Mammary epithelial cell (primary cell): ENCODE measurements at regions of chr3 and their contacts with region 1.

Region 1: GRCh38 chr3:64399205-64399800 is 174.0 kb upstream of the PRICKLE2 start:
- DNase-seq: peak; percentile 62
- H3K4me3 ChIP-seq: no peak overlapping the region
- H3K27ac ChIP-seq: no peak overlapping the region
- H3K4me1 ChIP-seq: no peaks in the 10 kb centered on the region
- H3K27me3 ChIP-seq: no peaks in the 10 kb centered on the region
- CTCF ChIP-seq: peak; percentile 82 to 90

Region 2: GRCh38 chr3:64030741-64031140 is 368.6 kb before region 1 on chr3:
- CTCF ChIA-PET with region 1: no interaction called
- dilution Hi-C with region 1: no loop called
- in situ Hi-C with region 1: loop called (anchors 5 to 10 kb)
- intact Hi-C with region 1: loop called (anchors 1 kb)
- DNase-seq: peak; percentile 58
- H3K4me3 ChIP-seq: peak overlapping the region in 1 of 3 experiments; percentile 6
- H3K27ac ChIP-seq: peak overlapping the region; percentile 16
- H3K4me1 ChIP-seq: peaks cover 9% of the 10 kb centered on the region
- H3K27me3 ChIP-seq: no peaks in the 10 kb centered on the region
- CTCF ChIP-seq: peak; percentile 64 to 94

Region 3: DNA sequence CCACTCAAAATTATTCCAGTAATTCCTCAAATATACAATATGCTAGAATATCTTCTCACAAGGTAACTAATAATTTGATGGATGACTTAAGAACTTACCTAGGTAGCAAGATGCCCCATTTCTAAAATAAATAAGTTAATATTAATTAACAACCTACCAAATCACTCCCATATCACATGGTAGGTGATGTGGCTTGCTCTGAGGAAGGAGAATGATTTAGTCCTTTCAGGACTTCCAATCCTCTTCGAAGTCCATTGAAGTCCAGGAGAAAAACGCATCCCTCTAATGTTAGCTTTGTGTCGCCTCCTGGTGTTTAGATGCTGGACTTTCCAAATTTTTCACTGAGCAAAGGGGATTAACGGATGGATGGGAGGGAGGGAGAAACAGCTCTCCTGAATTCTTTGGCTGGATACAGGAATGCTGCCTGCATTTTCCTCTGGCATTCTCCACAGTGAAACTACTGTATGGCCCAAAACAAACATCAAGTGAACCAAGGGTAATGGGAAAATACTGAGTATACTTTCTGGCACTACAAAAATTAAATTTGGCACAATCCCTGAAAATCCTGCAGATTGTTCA is 232.6 kb before region 1 on chr3:
- CTCF ChIA-PET with region 1: no interaction called
- dilution Hi-C with region 1: no loop called
- in situ Hi-C with region 1: no loop called
- intact Hi-C with region 1: no loop called
- DNase-seq: no peak
- H3K4me3 ChIP-seq: no peak overlapping the region
- H3K27ac ChIP-seq: peak overlapping the region; percentile 75
- H3K4me1 ChIP-seq: peaks cover 53% of the 10 kb centered on the region
- H3K27me3 ChIP-seq: no peaks in the 10 kb centered on the region
- CTCF ChIP-seq: peak; percentile 20 to 28

Region 4: DNA sequence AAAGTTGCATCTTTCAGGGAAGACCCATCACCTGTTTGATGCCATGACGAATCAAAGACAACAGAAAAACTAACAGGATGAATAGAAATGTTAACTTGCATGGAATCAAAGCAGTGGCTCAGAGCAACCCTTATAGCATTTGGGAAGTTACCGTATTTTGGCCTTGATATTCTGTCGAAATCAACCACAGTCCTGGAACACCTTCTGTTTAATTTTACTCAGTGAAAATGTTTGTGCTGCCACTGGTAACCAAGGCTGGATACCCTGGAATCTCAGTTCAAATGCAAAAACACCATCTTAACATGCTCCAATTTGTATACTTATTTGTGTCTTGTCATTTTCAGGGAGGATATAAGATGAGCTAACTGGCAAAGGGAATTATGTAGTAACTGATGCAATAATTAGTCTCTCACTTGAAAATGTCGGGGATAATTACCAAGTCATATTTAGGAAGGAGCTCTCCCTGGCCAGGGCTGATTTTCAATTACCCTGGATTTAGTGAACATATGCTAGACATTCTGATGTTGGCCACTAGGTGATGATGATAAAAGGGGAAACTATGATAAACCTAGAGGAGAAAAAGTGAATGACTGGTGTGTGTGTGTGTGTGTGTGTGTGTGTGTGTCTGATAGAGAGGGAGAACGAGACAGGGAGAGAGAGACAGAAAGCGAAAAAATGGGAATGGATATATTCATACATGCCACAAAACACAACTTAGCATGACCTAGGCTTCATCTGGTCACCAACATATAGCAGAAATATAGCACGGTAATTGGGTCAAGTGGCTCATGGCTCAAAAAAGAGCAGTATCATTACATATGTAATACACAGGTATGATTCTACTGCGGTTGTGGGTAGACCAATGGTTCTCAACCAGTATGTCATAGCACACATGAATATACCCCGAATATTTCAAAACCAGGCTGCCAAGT is 155.0 kb before region 1 on chr3:
- CTCF ChIA-PET with region 1: no interaction called
- dilution Hi-C with region 1: no loop called
- in situ Hi-C with region 1: no loop called
- intact Hi-C with region 1: loop called (anchors 1 kb)
- DNase-seq: no peak
- H3K4me3 ChIP-seq: no peak overlapping the region
- H3K27ac ChIP-seq: no peak overlapping the region
- H3K4me1 ChIP-seq: peaks cover 6% of the 10 kb centered on the region
- H3K27me3 ChIP-seq: no peaks in the 10 kb centered on the region
- CTCF ChIP-seq: peak; percentile 50 to 64

Region 5: DNA sequence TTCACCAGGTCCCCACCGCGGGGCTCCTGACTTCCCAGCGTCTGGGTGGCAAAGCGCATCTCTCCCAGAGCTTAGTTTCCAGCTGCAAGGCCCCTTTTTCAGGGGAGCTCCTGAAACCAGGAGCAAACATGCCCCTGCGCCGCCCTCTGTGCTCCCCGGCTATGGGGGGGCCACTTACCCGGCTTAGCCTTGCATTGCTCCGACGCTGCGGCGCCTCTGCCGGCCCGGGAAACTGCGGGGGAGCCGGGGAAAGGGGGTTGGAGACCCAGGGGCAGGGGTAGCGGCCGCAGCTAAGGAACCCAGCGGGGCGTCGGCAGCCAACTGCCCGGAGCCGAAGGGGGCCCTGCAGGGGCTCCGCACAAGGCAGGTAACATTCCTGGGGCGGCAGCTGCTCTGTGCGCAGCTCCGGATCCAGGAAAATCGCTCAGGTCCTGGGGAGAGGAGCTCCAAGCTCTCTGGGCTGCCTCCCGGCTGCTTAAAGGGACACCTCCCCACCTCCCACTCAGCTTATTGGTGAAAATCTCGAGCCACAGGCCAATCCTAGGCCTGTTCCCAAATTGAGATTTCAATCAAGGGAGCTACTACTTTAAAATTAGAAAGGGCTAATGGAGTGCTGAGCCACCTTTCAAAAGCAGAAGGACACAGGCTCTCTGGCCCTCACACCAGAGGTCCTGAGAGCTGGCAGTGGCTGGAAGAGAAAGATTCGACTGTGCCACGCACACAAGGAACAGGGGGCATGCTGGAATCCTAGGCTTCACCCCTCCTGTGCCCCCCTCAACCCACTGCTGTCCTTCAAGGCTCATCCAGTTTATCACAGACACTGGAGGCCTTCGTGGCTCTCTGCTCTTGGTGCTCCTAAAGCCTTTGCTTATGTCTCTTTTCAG is 131.3 kb before region 1 on chr3:
- CTCF ChIA-PET with region 1: no interaction called
- dilution Hi-C with region 1: no loop called
- in situ Hi-C with region 1: no loop called
- intact Hi-C with region 1: loop called (anchors 5 kb)
- DNase-seq: peak; percentile 76
- H3K4me3 ChIP-seq: peak overlapping the region; percentile 68 to 89 (median 84)
- H3K27ac ChIP-seq: peak overlapping the region; percentile 78
- H3K4me1 ChIP-seq: peaks cover 27% of the 10 kb centered on the region
- H3K27me3 ChIP-seq: no peaks in the 10 kb centered on the region
- CTCF ChIP-seq: peak in 1 of 2 donors; percentile 7

Region 6: DNA sequence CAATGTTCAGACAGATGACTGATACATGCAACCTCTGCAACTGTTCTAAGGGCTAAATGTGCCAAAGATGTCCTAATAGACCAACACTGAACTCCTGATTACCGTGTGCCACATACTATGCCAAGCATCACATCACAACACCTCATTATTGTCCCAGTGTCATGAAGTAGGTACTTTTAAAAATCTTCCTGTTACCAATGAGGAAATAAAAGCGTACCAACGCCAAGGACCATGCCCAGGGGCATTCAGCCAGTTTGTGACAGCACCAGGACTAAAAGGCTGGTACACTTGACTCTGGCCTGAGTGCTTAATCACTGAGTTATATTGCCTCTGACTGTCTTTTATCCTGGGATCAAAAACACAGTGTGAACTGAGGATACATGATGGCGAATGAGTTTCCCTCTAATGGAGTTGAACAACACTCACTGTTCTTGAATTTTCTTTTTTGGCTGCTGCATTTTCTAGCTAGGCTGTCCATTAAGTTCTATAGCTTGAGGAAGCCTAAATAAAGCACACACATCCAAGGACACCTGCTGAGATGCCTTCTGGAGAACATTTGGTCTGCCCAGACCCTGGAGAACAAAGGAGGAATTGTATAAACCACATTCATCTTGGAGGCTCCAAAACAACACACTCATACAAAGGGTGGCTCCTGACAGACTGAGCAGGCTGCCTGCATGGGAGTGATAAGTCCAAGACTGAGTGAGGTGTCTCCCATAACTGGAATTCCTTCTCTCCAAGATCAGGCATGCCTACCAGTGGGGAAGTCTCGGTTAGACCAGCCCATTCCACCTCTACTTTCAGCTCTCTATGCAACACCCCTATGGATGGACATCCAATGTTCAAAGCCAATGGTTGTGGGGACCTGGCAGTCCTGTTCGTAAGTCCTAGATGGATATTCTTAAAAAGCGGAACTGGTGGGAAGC is 47.3 kb before region 1 on chr3:
- CTCF ChIA-PET with region 1: no interaction called
- dilution Hi-C with region 1: no loop called
- in situ Hi-C with region 1: no loop called
- intact Hi-C with region 1: loop called (anchors 2 kb)
- DNase-seq: peak; percentile 97
- H3K4me3 ChIP-seq: peak overlapping the region in 2 of 3 experiments; percentile 18 to 22
- H3K27ac ChIP-seq: peak overlapping the region; percentile 96
- H3K4me1 ChIP-seq: peaks cover 48% of the 10 kb centered on the region
- H3K27me3 ChIP-seq: no peaks in the 10 kb centered on the region
- CTCF ChIP-seq: no peak

Region 7: GRCh38 chr3:64484289-64484992 is 85.1 kb after region 1 on chr3:
- CTCF ChIA-PET with region 1: no interaction called
- dilution Hi-C with region 1: no loop called
- in situ Hi-C with region 1: loop called in 1 of 2 experiments (anchors 10 kb)
- intact Hi-C with region 1: loop called (anchors 1 kb)
- DNase-seq: peak; percentile 58
- H3K4me3 ChIP-seq: no peak overlapping the region
- H3K27ac ChIP-seq: no peak overlapping the region
- H3K4me1 ChIP-seq: peaks cover 4% of the 10 kb centered on the region
- H3K27me3 ChIP-seq: no peaks in the 10 kb centered on the region
- CTCF ChIP-seq: peak; percentile 73 to 88

Region 8: DNA sequence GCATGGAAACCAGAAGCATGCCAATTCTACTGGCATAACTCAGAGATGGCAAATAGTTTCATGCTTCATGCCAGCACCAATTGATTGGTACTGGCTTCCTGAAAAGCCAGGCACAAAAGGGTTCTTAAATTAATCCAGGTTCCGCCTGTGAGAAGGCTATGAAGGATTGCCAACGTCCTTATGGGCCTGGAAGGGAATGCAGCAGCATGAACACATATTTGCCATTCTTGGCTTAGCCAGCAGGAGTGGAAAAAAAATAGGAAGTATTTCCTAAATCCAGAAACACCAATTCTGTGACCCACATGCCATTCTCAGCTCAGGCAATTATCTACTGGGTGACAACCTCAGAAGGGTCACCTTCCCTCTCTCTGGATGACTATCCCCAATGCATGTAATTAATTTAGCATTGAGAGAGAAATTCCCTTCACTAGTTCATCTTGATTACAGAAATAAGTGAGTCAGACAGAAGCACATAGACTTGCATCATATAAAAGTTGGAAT is 252.5 kb after region 1 on chr3:
- CTCF ChIA-PET with region 1: no interaction called
- dilution Hi-C with region 1: no loop called
- in situ Hi-C with region 1: no loop called
- intact Hi-C with region 1: no loop called
- DNase-seq: no peak
- H3K4me3 ChIP-seq: no peak overlapping the region
- H3K27ac ChIP-seq: no peak overlapping the region
- H3K4me1 ChIP-seq: no peaks in the 10 kb centered on the region
- H3K27me3 ChIP-seq: no peaks in the 10 kb centered on the region
- CTCF ChIP-seq: no peak

Region 9: GRCh38 chr3:64687781-64688604 is 288.7 kb after region 1 on chr3 and contains the start of gene ADAMTS9:
- CTCF ChIA-PET with region 1: no interaction called
- dilution Hi-C with region 1: no loop called
- in situ Hi-C with region 1: no loop called
- intact Hi-C with region 1: no loop called
- DNase-seq: peak; percentile 71
- H3K4me3 ChIP-seq: peak within 1 kb of the TSS; percentile 69 to 79 (median 71)
- H3K27ac ChIP-seq: peak within 1 kb of the TSS; percentile 34
- H3K4me1 ChIP-seq: peaks cover 10% of the 10 kb centered on the region
- H3K27me3 ChIP-seq: no peaks in the 10 kb centered on the region
- CTCF ChIP-seq: no peak
- total RNA-seq, gene ADAMTS9: 2.7 to 7.5 TPM